ENCODE measurements at regions of chr11 and their contacts with region 1.

Region 1: GRCh38 chr11:63838678-63839507 is at the start of gene MARK2:
- DNase-seq: peak; percentile 96
- H3K4me3 ChIP-seq: peak within 1 kb of the TSS; percentile 91
- H3K27ac ChIP-seq: peak within 1 kb of the TSS; percentile 39
- H3K27me3 ChIP-seq: no peaks in the 10 kb centered on the region
- CTCF ChIP-seq: no peak
- polyA plus RNA-seq, gene MARK2: 14.5 and 16.5 TPM in 2 replicates

Region 2: GRCh38 chr11:63508009-63508408 is 330.9 kb before region 1 on chr11:
- CTCF ChIA-PET with region 1: no interaction called
- POLR2A ChIA-PET with region 1: no interaction called
- DNase-seq: no peak
- H3K4me3 ChIP-seq: no peak overlapping the region
- H3K27ac ChIP-seq: no peak overlapping the region
- H3K27me3 ChIP-seq: peaks cover 7% of the 10 kb centered on the region
- CTCF ChIP-seq: no peak

Region 3: DNA sequence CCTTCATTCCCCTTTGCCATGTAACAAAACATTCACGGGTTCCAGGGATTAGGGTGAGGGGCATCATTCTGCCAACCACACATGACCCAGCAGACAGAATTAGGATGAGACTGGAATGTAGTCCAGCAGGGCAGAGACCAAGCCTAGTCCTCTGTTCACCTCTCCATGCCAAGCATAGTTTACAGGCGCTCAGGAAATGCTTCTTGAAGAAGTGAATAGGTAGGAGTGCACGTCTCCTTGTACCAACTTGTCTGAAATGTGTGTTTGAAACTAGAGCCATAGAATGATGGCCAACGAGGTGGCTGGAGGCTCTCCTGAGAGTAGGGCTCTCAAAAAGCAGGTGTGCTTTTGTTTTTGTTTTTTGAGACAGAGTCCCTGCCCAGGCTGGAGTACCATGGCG is 17.5 kb before region 1 on chr11:
- CTCF ChIA-PET with region 1: interaction called, 17 read pairs
- POLR2A ChIA-PET with region 1: no interaction called
- DNase-seq: no peak
- H3K4me3 ChIP-seq: no peak overlapping the region
- H3K27ac ChIP-seq: no peak overlapping the region
- H3K27me3 ChIP-seq: no peaks in the 10 kb centered on the region
- CTCF ChIP-seq: no peak

Region 4: DNA sequence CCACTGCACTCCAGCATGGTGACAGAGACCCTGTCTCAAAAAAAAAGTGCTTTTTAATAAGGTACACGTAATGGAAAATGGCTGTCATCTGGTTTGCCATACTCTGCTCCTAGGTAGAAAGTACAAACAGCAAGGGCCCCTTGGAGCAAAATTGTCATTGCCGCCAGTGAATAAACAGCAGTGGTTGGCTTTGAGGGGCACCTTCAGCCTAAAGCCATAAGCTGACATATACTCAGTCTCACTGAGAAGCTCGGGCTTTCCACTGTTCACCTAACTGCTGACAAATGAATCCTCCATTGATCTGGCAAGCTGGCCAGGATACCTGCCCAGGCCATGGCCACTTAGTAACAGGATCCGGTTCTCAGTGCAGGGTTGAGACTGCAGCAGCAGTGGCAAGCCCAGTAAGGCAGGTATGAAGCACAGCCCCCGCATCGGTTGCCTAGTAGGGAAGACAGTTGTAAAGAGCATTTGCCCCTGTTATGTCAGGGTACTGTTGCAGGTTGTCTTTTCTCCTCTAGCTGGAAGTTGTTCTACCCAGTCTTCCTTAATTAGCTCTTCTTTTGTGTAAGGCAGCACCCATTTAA is 38.9 kb after region 1 on chr11:
- CTCF ChIA-PET with region 1: interaction called, 11 read pairs
- POLR2A ChIA-PET with region 1: interaction called, 4 read pairs
- DNase-seq: no peak
- H3K4me3 ChIP-seq: no peak overlapping the region
- H3K27ac ChIP-seq: no peak overlapping the region
- H3K27me3 ChIP-seq: no peaks in the 10 kb centered on the region
- CTCF ChIP-seq: no peak

Region 5: DNA sequence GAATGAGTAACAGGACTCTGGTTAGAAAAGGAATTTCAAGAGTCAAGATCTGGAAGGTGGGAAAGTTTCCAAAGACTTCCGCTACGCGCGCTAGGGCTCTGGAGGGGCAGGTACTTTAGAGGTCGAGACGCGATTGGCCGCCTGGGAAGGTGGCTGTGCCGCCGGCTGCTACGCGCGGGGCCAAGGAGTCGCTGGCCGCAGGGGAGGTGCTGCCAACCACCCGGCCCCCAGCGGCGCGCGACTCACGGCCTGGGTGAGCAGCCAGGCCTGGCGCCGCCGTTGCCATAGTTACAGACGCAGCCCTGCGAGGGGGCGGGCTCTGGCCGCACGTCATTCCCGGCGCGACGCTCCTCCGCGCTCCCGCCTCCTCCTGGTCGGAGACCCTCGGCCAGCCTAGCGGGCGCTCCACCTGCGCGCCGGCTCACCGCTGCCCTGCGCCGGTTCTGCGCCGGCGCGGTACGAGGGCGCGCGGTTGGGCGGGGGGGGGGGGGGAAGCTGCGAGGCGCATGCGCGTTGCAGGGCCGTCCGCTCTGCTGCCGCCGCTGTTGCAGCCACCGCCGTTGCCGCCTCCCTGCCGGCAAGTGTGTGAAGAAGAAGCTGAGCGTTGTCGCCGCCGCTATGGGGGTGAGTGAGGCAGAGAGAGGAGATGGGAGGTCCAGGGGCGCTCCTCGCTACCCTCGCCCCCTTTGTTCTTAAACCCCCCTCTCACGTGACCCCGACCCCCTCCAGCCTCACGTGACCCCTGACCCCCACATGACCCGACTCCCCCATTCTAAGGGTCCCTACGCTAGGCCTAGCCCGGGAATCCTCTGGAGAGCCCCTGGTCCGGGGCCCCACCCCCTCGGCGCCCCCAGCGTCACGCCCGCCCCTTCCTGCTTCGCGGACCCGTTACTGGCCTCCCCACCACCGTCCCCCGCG is 99.8 kb after region 1 on chr11 and contains the start of gene NAA40:
- CTCF ChIA-PET with region 1: interaction called, 256 read pairs
- POLR2A ChIA-PET with region 1: interaction called, 3 read pairs
- DNase-seq: peak; percentile 90
- H3K4me3 ChIP-seq: peak within 1 kb of the TSS; percentile 94
- H3K27ac ChIP-seq: peak within 1 kb of the TSS; percentile 33
- H3K27me3 ChIP-seq: no peaks in the 10 kb centered on the region
- CTCF ChIP-seq: no peak
- polyA plus RNA-seq, gene NAA40: 17.4 and 18.0 TPM in 2 replicates

Region 6: DNA sequence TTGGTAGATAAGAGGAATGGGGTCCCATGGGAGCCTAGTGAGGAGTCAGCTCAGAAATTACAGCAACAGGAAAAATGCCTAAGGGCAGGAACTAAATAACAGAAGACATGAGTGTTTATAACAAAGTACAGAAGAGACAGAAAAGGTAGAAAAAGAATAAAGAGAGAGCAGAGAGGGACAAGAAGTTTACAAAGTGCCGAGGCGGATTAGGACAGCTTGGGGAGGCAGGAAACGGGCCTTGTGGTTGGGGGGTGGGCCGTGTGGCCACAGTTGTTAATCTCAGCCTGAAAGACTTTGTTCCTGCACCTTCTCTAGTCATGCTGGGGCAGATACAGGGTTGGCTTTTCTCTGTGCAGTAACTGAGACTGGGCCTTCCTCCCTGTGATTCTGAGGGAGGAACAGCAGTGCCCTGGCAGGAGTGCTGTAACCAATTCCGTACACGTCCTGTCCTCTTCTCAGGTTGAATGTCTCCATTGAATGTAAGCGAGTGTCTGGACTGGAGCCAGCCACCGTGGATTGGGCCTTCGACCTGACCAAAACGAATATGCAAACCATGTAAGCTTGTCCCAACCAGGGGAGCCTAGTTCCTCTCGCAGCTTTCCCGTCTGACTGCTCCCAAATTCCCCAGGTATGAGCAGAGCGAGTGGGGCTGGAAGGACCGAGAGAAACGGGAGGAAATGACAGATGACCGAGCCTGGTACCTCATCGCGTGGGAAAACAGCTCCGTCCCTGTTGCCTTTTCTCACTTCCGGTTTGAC is 113.1 kb after region 1 on chr11:
- CTCF ChIA-PET with region 1: interaction called, 256 read pairs
- POLR2A ChIA-PET with region 1: no interaction called
- DNase-seq: no peak
- H3K4me3 ChIP-seq: no peak overlapping the region
- H3K27ac ChIP-seq: no peak overlapping the region
- H3K27me3 ChIP-seq: no peaks in the 10 kb centered on the region
- CTCF ChIP-seq: no peak

Region 7: DNA sequence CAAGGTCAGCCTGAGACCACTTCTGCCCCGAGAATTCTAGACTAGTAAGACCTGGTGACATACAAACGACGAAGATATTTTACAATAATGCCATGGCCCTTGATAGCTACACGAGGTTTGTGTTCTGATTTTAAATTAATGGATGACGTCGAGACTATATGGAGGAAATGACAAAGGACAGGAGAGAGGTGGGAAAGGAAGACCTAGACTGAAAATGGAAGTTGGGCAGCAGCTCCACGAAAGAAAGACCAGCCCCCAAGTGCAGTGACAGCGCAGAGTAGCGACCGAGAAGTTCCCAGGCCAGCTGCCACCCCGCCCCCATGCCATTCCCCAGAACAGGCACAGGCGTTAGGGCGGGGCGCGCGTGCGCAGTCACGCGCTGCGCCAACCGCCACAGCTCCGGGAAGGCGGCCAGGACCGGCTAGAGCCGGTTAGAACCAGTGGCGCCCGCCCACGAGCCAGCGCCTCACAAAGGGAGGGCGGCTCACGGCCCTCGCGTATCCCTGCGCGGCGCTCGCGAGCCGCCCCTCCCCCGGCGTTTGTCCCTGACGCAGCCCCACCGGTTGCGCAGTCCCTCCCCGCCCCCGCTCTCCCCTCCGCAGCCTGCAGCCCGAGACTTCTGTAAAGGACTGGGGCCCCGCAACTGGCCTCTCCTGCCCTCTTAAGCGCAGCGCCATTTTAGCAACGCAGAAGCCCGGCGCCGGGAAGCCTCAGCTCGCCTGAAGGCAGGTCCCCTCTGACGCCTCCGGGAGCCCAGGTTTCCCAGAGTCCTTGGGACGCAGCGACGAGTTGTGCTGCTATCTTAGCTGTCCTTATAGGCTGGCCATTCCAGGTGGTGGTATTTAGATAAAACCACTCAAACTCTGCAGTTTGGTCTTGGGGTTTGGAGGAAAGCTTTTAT is 1658.5 kb after region 1 on chr11:
- CTCF ChIA-PET with region 1: no interaction called
- POLR2A ChIA-PET with region 1: no interaction called
- DNase-seq: peak; percentile 98
- H3K4me3 ChIP-seq: peak overlapping the region; percentile 97
- H3K27ac ChIP-seq: peak overlapping the region; percentile 98
- H3K27me3 ChIP-seq: no peaks in the 10 kb centered on the region
- CTCF ChIP-seq: no peak

Measured in AG04450 (cell line).